GM18951 (cell line): ENCODE measurements at regions of chr4 and their contacts with region 1.

Region 1: DNA sequence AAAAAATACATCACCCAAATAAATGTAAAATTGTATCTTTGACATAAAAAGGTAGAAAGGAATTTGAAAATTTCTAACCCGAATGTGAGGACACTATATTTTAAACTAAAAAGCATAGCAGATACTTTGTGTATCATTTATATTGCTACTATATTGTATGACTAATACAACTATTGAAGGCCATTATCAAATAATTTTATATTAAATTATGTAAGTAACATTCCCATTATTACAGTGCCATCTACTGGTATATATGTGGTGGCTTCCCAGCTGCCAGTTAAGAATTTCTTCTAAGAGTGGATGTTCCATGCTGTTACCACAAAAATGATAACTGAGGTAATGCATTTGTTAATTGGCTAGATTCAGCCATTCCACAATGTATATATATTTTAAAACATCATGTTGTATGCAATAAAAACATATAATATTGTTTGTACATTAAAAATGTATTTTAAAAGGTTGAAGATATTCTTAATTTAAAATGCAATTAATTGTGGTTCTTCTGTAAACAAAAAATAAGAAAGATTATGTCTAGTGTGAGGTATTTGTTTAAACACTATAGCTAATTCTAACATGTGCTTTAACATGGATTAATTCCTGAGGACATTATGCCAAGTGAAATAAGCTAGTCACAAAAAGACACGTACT is 65.3 kb downstream of the EGF start:
- POLR2A ChIP-seq: no peak

Region 2: GRCh38 chr4:109411964-109412363 is 566.0 kb before region 1 on chr4:
- in situ Hi-C with region 1: loop called (anchors 10 kb)
- POLR2A ChIP-seq: no peak

Region 3: GRCh38 chr4:109648266-109648996 is 329.5 kb before region 1 on chr4:
- in situ Hi-C with region 1: no loop called
- POLR2A ChIP-seq: no peak